Activated naive CD4-positive, alpha-beta T cell treated with anti-CD3 and anti-CD28 coated beads for 36 hours (primary cell): ENCODE measurements at regions of chr7 and their contacts with region 1.

Region 1: GRCh38 chr7:138738551-138739335 is 37.6 kb upstream of the SVOPL start:
- DNase-seq: peak; percentile 94
- H3K4me3 Mint-ChIP-seq: no peak overlapping the region
- H3K27ac Mint-ChIP-seq: no peak overlapping the region
- H3K4me1 Mint-ChIP-seq: peaks cover 6% of the 10 kb centered on the region
- H3K27me3 Mint-ChIP-seq: no peaks in the 10 kb centered on the region

Region 2: DNA sequence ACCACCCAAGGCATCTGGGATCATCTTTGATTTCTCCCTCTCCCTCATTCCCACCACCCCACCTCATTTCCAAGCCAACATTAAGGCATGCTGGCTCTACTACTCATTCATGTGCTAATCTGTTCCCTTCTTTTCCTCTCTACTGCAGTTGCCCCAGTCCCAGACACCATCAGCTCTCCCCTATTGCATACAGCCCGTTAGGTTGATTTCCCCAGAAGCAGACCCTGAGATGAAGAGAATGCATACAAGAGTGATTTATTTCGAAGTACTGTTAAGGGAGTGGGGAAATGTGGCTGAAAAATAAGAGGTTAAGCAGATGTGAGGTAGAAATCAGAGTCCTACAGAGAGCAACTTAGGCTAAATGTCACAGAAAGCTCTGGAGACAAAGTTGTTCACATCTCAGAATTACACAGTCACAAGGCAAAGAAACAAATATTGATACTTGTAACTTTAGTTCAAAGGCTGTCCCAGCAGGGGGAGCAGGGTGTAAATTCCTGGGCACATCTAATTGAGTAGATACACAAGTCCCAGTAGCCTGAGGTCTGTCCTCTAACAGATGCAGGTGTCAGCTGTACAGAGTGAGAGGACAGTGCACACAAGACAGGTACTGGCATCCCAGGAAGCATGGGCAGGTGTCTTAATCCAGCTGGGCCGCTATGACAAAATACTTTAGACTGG is 641.5 kb before region 1 on chr7:
- CTCF ChIA-PET with region 1: interaction called, 4 read pairs
- intact Hi-C with region 1: loop called (anchors 1 kb)
- DNase-seq: peak; percentile 25
- H3K4me3 Mint-ChIP-seq: no peak overlapping the region
- H3K27ac Mint-ChIP-seq: no peak overlapping the region
- H3K4me1 Mint-ChIP-seq: no peaks in the 10 kb centered on the region
- H3K27me3 Mint-ChIP-seq: peaks cover 4% of the 10 kb centered on the region

Region 3: DNA sequence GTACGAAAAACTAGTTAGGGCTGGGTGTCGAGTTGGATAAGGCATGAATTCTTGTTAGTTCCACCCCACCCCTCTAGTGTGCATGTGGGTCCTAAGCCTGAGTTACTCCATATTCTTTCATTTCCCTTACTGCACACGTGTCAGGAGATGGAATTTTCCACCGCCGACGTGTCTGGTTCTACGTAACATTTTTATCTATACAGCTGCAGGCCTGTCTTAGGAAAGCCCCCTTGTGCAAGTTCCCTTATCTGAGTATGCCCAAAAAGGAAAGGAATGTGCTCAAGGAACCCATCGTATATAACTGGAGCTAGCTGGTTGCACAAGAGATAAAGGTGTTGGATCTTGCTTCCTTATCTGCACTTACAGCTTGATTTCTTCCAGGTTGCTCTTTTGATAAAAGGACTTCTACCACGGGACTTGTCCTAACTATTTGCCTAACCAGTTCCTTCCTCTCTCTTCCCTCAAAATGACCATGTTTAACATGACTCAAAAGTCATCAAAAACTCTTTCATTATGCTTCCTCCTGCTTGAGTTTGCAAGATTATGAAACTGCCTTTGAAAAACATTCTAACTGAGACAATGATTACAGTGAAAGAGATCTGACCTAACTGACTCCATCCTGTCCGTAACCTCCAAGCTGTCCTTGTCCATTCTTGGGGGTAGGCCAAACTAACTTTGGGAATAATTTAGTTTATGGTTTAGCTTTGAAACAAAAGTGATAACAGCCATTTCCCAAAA is 481.1 kb before region 1 on chr7:
- CTCF ChIA-PET with region 1: no interaction called
- intact Hi-C with region 1: loop called (anchors 10 kb)
- DNase-seq: no peak
- H3K4me3 Mint-ChIP-seq: no peak overlapping the region
- H3K27ac Mint-ChIP-seq: no peak overlapping the region
- H3K4me1 Mint-ChIP-seq: peaks cover 6% of the 10 kb centered on the region
- H3K27me3 Mint-ChIP-seq: no peaks in the 10 kb centered on the region

Region 4: GRCh38 chr7:138449580-138449979 is 289.2 kb before region 1 on chr7:
- CTCF ChIA-PET with region 1: interaction called, 5 read pairs
- intact Hi-C with region 1: loop called (anchors 1 kb)
- DNase-seq: peak; percentile 49
- H3K4me3 Mint-ChIP-seq: no peak overlapping the region
- H3K27ac Mint-ChIP-seq: no peak overlapping the region
- H3K4me1 Mint-ChIP-seq: no peaks in the 10 kb centered on the region
- H3K27me3 Mint-ChIP-seq: no peaks in the 10 kb centered on the region

Region 5: GRCh38 chr7:138768241-138768640 is 29.5 kb after region 1 on chr7:
- CTCF ChIA-PET with region 1: no interaction called
- intact Hi-C with region 1: no loop called
- DNase-seq: no peak
- H3K4me3 Mint-ChIP-seq: no peak overlapping the region
- H3K27ac Mint-ChIP-seq: no peak overlapping the region
- H3K4me1 Mint-ChIP-seq: no peaks in the 10 kb centered on the region
- H3K27me3 Mint-ChIP-seq: no peaks in the 10 kb centered on the region

Region 6: GRCh38 chr7:138865843-138866242 is 127.1 kb after region 1 on chr7:
- CTCF ChIA-PET with region 1: interaction called, 5 read pairs
- intact Hi-C with region 1: loop called (anchors 1 kb)
- DNase-seq: peak; percentile 67
- H3K4me3 Mint-ChIP-seq: no peak overlapping the region
- H3K27ac Mint-ChIP-seq: no peak overlapping the region
- H3K4me1 Mint-ChIP-seq: peaks cover 19% of the 10 kb centered on the region
- H3K27me3 Mint-ChIP-seq: no peaks in the 10 kb centered on the region

Region 7: DNA sequence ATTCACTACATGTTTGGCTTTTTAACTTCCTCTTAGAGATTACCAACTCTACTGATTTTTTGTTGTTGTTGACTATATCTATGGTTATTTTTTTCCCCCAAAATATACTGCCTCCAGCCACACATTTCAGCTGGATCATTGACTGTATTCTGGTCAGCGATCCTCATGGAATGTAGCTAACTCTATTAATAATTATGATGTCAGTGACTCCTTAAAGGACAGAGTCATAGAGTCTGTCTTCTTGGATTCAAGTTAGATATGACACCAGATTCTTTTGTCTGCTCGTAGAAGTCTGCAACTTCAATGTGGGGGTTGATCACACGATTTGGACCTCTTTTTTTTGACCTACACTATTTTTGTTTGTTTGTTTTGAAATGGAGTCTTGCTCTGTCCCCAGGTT is 525.5 kb after region 1 on chr7:
- CTCF ChIA-PET with region 1: no interaction called
- intact Hi-C with region 1: no loop called
- DNase-seq: no peak
- H3K4me3 Mint-ChIP-seq: no peak overlapping the region
- H3K27ac Mint-ChIP-seq: no peak overlapping the region
- H3K4me1 Mint-ChIP-seq: no peaks in the 10 kb centered on the region
- H3K27me3 Mint-ChIP-seq: no peaks in the 10 kb centered on the region